IMR-90 (cell line): ENCODE measurements at regions of chr9 and their contacts with region 1.

Region 1: DNA sequence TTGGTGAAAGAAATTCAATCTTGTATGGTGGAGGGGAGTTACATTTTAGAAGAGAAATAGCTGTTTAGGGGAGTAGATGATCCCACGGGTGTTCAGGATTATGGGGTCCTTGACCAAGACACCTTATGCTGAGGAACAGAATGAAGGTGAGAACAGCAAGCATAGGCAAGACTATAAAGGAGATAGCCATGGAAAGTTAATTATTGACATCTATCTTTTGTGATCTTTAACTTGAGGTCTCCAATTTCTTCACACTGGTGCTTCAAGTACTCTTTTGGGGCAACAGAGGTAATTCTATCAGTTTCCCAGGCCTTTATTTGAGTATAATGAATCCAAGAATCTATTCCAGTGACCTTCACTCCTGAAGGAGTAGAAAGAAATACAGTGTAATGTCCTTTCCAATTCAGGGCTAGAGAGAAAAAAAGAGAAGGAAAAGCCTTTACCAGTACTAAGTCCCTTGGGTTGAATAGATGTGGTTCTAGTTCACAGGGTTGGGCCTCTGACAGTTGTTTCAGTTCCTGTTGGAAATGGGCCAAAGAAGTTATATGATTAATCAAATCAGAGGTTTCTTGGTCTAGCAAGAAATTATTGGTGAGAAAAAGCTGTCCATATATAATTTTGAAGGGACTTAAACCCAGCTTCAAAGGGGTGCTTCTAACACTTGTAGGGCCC is 2104.1 kb upstream of the ACO1 start:
- DNase-seq: no peak
- ATAC-seq: no peak
- H3K4me3 ChIP-seq: no peak overlapping the region
- H3K27ac ChIP-seq: no peak overlapping the region
- H3K4me1 ChIP-seq: no peaks in the 10 kb centered on the region
- H3K27me3 ChIP-seq: no peaks in the 10 kb centered on the region
- CTCF ChIP-seq: no peak
- POLR2A ChIP-seq: no peak
- RAD21 ChIP-seq: no peak

Region 2: DNA sequence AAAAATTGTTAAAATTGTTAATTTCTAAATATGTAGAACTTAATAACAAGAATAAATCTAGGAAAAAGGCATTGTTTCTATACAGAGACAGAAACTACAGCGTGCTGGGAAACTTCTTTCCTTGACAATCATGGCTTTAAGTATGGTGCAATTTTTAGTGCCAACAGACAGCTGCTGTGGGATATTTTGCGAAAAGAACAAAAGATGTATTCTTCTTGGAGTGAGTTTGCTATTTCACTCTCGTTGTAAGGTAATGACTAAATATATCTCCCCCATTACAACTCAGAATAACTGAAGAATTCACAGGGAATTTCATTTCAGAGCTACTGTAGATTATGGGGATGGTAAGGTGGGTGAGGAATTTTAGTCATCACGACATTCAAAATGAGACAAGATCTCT is 49.1 kb after region 1 on chr9:
- CTCF ChIA-PET with region 1: no interaction called
- POLR2A ChIA-PET with region 1: no interaction called
- dilution Hi-C with region 1: no loop called
- in situ Hi-C with region 1: loop called (anchors 10 kb)
- intact Hi-C with region 1: loop called (anchors 1 kb)
- DNase-seq: no peak
- ATAC-seq: no peak
- H3K4me3 ChIP-seq: no peak overlapping the region
- H3K27ac ChIP-seq: no peak overlapping the region
- H3K4me1 ChIP-seq: no peaks in the 10 kb centered on the region
- H3K27me3 ChIP-seq: no peaks in the 10 kb centered on the region
- CTCF ChIP-seq: no peak
- POLR2A ChIP-seq: no peak
- RAD21 ChIP-seq: no peak